Activated CD4-positive, alpha-beta memory T cell treated with anti-CD3 and anti-CD28 coated beads for 36 hours (primary cell): ENCODE measurements at regions of chr1 and their contacts with region 1.

Region 1: DNA sequence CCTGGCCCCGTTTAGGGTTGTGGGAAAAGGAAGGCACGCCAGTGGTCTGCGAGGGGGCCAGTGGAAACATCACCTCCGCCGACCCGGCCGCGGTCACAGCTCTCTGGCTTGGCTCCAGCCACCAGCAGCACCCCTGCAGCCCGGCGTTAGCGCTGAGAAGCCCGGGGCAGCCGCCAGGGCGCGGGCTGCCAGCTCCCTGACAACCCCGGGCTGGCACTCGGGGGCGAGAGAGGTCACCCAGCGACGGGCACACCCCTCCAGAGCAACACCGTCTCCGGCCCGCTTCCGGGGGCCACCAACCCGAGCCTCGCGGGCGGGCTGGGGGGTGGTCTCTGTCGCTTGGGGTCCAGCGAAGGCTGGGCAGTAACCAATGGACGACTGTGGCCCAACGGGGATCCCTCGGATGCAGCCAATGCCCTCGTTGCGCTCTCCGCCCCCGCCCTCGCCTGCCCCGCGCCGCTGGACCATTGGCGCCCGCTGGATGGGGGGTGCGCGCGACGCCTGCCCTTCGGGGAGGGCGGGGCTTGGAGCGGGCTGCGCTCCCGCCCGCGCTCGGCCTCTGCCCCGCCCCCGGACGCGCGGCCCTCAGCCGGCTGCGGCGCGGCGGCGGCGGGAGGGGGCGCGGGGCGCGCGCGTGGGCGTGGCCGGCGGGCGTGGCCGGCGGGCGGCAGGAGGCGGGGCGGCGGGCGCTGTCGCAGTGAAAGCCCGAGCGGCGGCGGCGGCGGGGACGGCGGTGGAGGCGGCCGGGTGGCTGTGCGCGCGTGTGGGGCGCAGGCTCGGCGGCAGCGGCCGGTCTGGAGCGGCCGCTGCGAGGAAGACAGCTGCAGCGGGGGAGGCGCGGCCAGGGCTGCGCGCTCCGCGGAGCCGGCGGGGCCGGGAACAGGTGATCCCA is at the start of gene MAN1C1:
- DNase-seq: peak; percentile 81
- H3K4me3 Mint-ChIP-seq: peak within 1 kb of the TSS; percentile 61
- H3K27ac Mint-ChIP-seq: peak within 1 kb of the TSS; percentile 10
- H3K4me1 Mint-ChIP-seq: peaks cover 51% of the 10 kb centered on the region
- H3K27me3 Mint-ChIP-seq: peaks cover 12% of the 10 kb centered on the region
- total RNA-seq, gene MAN1C1: 4.6 to 4.8 TPM

Region 2: GRCh38 chr1:25631750-25632485 is 15.6 kb after region 1 on chr1:
- CTCF ChIA-PET with region 1: interaction called, 26 read pairs
- POLR2A ChIA-PET with region 1: interaction called, 3 read pairs
- intact Hi-C with region 1: loop called (anchors 1 kb)
- DNase-seq: no peak
- H3K4me3 Mint-ChIP-seq: peak overlapping the region; percentile 81
- H3K27ac Mint-ChIP-seq: peak overlapping the region; percentile 85
- H3K4me1 Mint-ChIP-seq: peaks cover 59% of the 10 kb centered on the region
- H3K27me3 Mint-ChIP-seq: no peaks in the 10 kb centered on the region

Region 3: DNA sequence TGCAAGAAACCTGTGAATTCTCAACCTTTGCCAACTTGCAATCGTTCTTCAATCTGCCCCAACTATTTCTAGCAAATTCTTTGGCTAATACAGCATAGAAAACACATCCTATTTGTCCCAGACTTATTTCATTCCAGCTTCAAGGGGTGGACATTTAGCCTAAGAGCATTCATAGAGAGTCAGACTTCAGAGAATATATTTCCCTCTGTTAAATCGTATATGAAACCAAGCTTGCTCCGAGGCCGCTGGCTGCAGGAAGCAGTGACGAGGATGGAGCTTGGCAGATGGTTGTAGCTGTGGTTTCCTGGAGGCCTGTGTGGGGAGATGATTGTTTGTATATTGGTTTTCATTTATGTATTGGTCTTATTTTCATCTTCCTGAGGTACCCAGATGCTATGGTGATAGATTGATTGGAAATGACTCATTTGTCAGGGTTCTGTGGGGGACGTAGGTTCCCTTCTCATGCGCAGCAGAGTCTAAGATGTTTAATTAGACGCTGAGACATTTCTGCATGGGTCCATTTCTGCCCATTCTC is 26.3 kb after region 1 on chr1:
- CTCF ChIA-PET with region 1: interaction called, 27 read pairs
- POLR2A ChIA-PET with region 1: interaction called, 5 read pairs
- intact Hi-C with region 1: loop called (anchors 1 kb)
- DNase-seq: peak; percentile 86
- H3K4me3 Mint-ChIP-seq: peak overlapping the region; percentile 45
- H3K27ac Mint-ChIP-seq: peak overlapping the region; percentile 65
- H3K4me1 Mint-ChIP-seq: peaks cover 61% of the 10 kb centered on the region
- H3K27me3 Mint-ChIP-seq: peaks cover 3% of the 10 kb centered on the region

Region 4: DNA sequence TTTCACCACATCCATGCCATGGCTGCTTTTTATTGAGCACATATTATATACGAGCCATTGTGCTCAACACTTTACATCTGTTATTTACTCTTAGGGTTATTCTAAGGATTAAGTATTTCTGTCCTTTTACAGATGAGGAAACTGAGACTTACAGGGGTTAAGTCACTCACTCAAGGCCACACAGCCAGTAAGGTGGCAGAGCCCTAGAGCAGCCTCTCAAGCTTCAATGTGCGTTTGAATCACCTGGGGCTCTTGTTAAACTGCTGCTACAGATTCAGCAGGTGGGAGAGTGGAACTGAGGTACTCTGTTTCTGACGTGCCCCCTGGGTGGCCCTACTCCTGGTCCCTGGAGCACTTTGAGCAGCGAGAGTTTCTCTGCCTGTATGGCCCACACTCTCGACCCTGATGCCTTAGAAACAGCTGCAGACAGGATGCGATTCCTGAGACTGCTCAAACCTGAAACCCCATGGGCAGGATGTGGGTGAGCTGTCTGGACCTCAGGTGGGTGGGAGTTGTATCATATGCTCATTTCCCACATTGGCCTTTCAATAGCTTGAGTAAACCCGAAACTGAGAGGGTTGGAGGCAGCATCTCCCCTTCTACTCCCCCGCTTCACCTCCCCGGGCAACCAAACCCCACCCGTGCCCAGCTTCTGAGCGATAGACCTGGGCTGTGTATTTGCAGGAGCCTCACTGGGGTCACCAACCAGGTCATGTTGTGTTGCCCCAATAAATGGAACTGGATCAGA is 59.6 kb after region 1 on chr1:
- CTCF ChIA-PET with region 1: interaction called, 29 read pairs
- POLR2A ChIA-PET with region 1: interaction called, 12 read pairs
- intact Hi-C with region 1: loop called (anchors 1 kb)
- DNase-seq: peak; percentile 96
- H3K4me3 Mint-ChIP-seq: peak overlapping the region; percentile 59
- H3K27ac Mint-ChIP-seq: peak overlapping the region; percentile 69
- H3K4me1 Mint-ChIP-seq: peaks cover 71% of the 10 kb centered on the region
- H3K27me3 Mint-ChIP-seq: peaks cover 15% of the 10 kb centered on the region

Region 5: GRCh38 chr1:25695090-25695770 is 78.9 kb after region 1 on chr1:
- CTCF ChIA-PET with region 1: interaction called, 11 read pairs
- POLR2A ChIA-PET with region 1: no interaction called
- intact Hi-C with region 1: loop called (anchors 5 kb)
- DNase-seq: no peak
- H3K4me3 Mint-ChIP-seq: no peak overlapping the region
- H3K27ac Mint-ChIP-seq: peak overlapping the region; percentile 59
- H3K4me1 Mint-ChIP-seq: peaks cover 45% of the 10 kb centered on the region
- H3K27me3 Mint-ChIP-seq: no peaks in the 10 kb centered on the region

Region 6: DNA sequence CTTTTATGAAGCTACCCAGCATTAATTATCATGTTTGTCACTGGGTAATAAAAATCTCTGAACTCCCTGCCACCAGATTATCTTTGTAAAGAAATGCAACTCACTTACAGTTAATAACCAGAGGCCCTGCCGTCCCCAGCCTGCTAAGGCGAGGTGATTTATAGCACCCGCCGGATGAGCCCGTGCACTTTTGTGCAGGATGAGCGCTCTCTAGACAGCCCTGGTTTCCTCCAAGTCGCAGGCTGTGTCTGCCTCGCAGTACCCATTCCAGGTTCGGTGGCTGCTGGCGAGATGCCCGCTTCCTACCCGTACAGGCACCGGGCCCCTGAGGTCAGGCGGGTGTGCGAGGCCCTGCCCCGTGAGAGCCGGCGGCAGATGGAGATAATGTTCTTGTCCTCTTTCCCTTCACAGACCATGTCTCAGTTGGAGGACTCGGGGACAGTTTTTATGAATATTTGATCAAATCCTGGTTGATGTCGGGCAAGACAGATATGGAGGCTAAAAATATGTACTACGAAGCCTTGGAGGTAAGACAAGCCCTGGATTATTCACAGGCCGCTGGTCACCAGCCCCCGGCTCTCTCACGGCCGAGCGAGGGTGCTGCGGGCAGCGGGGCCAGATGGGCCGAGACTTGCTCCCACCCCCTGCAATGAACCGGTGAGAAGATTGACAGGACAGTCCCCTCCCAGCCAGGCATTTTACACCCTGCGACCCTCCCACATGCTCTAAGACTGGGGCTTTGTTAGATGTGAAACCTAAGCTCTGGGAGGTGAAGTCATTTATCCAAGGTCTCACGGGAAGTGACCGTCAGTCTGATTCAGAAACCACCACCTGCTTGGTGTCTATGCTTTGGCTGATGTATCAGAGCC is 155.1 kb after region 1 on chr1:
- CTCF ChIA-PET with region 1: interaction called, 12 read pairs
- POLR2A ChIA-PET with region 1: no interaction called
- intact Hi-C with region 1: no loop called
- DNase-seq: peak; percentile 30
- H3K4me3 Mint-ChIP-seq: no peak overlapping the region
- H3K27ac Mint-ChIP-seq: no peak overlapping the region
- H3K4me1 Mint-ChIP-seq: peaks cover 58% of the 10 kb centered on the region
- H3K27me3 Mint-ChIP-seq: no peaks in the 10 kb centered on the region